Activated naive CD4-positive, alpha-beta T cell treated with anti-CD3 and anti-CD28 coated beads for 36 hours (primary cell): ENCODE measurements at regions of chr7 and their contacts with region 1.

Region 1: GRCh38 chr7:92461027-92462003 is 14.0 kb downstream of the GATAD1 start:
- DNase-seq: peak; percentile 53
- H3K4me3 Mint-ChIP-seq: no peak overlapping the region
- H3K27ac Mint-ChIP-seq: no peak overlapping the region
- H3K4me1 Mint-ChIP-seq: no peaks in the 10 kb centered on the region
- H3K27me3 Mint-ChIP-seq: no peaks in the 10 kb centered on the region

Region 2: DNA sequence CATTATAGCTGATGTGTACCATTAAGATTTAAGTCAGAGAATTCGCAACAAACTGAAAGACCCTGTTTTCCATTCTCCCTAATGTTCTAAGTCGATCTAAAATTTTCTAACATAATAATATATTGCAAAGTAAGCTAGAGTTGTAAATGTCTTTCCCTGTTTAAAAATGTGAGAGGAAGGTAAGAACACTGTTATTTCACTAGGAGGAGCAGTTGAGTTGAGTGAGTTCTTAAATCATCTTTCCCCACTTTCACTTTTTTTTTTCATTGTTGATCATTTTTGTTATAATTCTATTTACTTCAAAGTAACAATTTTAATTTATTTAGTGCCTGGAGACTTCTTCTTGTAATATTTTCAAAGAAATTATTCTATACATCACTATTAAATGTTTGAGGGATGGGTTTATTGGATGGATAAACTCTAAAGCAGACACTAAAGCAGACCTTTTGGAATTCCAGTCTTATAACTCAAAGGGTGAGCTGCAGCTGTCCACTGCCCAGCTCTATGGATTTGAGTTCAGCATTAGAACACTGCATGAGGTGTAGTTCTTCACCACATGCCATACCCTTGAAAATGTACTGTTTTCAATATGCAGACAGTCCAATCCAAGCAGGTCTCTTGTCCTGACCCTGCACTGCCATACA is 1378.3 kb before region 1 on chr7:
- CTCF ChIA-PET with region 1: no interaction called
- intact Hi-C with region 1: loop called (anchors 5 kb)
- DNase-seq: no peak
- H3K4me3 Mint-ChIP-seq: peak overlapping the region; percentile 13
- H3K27ac Mint-ChIP-seq: no peak overlapping the region
- H3K4me1 Mint-ChIP-seq: peaks cover 36% of the 10 kb centered on the region
- H3K27me3 Mint-ChIP-seq: no peaks in the 10 kb centered on the region

Region 3: DNA sequence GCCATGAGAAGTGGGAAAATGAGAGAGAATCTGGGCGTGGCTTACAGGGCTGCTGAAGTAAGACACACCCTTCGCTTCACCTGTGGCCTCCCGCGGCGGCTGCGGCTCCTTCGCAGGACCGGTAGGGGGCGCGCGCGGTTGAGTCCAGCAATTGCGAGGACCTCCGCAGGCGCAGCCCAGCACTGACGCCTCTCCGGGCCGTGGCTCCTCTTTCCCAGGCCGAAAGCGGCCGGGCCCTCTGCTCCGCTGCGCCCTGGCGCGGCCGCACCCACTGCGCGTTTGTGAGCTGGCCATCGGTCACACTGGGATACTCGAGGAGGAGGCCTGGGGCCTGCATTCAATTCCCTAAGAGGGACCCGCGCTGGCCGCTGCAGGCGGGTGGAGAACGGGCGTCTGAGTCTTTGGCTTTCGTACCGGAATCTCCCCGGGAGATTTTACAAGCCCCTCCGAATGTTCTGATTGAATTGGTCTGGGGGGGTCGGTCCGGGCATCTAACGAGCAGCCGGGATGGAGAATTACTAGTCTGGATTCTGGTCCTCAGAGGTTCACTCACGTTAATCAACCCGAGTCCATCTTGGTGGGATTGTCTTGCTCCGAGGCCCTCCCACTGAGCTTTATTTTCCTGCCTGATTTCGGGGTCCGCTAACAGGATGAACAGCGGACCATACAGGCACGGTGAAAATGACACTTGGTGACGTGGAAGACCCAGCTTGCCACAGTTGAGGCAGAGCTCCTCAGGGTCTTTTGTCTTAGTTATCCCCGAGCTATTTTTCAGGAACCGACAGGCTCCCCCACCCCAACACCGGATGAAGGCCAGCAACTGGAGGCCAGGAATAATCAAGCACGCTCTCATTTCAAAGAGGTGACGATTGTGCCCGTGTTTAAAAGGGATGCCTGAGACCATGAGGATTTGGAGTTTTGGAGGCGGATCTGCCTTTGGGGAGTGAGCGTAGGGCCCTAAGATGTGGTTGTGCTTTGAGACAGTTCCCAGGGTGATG is 282.1 kb before region 1 on chr7 and contains the start of gene LRRD1:
- CTCF ChIA-PET with region 1: interaction called, 8 read pairs
- intact Hi-C with region 1: loop called (anchors 1 kb)
- DNase-seq: peak; percentile 94
- H3K4me3 Mint-ChIP-seq: peak within 1 kb of the TSS; percentile 72
- H3K27ac Mint-ChIP-seq: no peak within 1 kb of the TSS
- H3K4me1 Mint-ChIP-seq: peaks cover 10% of the 10 kb centered on the region
- H3K27me3 Mint-ChIP-seq: peaks cover 3% of the 10 kb centered on the region
- total RNA-seq, gene LRRD1: not detected

Region 4: GRCh38 chr7:92325858-92326257 is 135.5 kb before region 1 on chr7:
- CTCF ChIA-PET with region 1: no interaction called
- intact Hi-C with region 1: no loop called
- DNase-seq: no peak
- H3K4me3 Mint-ChIP-seq: no peak overlapping the region
- H3K27ac Mint-ChIP-seq: no peak overlapping the region
- H3K4me1 Mint-ChIP-seq: no peaks in the 10 kb centered on the region
- H3K27me3 Mint-ChIP-seq: no peaks in the 10 kb centered on the region

Region 5: DNA sequence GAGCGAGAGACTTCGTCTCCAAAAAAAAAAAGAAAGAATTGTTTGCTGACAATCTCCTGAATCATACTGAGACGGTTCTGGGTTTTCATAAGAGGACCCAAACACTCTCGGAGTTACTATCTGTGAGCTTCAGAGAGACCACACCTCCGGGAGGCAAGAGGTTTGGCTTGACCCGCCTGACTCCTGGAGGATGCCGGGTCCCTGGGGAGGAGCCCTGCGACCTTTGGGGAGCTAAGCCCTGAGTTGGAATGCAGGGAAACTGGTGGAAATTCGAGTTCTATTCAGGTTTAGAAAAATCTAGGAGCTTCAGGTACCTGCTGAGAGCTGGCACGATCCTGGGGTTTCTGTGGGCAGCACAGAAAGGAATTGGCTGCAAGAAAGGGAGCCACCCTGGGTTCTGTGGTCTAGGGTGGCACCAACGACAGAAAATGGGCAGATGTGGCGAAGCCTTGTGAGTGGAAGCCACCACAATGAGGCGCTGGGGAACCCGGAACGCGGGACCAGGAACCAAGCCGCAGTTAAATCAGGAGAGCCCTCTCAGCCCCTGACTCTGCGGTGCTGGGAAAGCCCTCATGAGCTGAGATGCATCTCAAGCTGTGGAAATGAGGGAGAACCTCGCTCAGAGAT is 35.9 kb before region 1 on chr7:
- CTCF ChIA-PET with region 1: interaction called, 17 read pairs
- intact Hi-C with region 1: loop called (anchors 1 kb)
- DNase-seq: peak; percentile 20
- H3K4me3 Mint-ChIP-seq: peak overlapping the region; percentile 19
- H3K27ac Mint-ChIP-seq: no peak overlapping the region
- H3K4me1 Mint-ChIP-seq: peaks cover 11% of the 10 kb centered on the region
- H3K27me3 Mint-ChIP-seq: peaks cover 14% of the 10 kb centered on the region